Posterior vena cava (tissue), 2 donors: ENCODE measurements at regions of chr5 and their contacts with region 1.

Region 1: DNA sequence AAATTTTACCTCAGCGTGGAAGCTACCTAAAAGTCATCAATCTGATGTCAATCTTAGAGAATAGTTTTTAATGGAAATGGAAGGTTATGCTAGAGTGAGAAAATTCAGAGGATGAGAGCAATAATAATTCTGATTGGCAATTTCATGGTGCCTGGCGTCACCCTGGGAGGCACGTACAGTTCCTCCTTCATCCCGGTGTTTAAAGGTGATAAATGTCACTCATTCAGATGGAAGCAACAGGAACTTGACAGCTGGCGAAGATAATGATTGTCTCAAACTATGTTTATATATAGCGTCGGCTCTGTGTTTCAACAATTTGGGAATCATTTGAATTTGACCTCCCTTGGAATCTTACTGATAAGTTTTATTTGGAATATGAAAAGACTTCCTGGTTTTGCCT is 108.4 kb downstream of the MED10 start:
- DNase-seq: no peak

Region 2: DNA sequence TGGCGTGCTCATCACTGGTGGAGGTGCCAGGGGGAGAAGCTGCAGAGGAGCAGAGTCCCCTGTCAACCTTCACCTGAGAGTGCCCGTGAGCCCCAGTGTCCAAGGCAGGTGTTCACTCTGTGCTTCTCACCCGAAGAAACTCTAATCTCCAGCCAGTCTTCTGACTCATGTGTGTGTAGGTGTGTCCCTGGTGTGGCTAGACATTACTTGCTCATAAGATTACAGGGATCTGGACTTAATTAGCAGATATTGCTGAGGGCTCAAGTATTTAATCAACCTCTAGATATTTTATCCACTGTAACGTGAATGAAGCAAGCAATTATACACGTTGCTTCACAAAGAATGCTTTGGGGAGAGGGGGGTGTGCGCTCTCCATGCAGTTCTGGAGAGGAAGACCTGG is 35.9 kb after region 1 on chr5:
- intact Hi-C with region 1: loop called in 1 of 2 experiments (anchors 2 kb)
- DNase-seq: no peak